ENCODE measurements at regions of chr15 and their contacts with region 1.

Region 1: GRCh38 chr15:43749690-43750345 is 3.6 kb downstream of the PDIA3 start:
- DNase-seq: peak; percentile 71
- H3K4me3 Mint-ChIP-seq: peak overlapping the region; percentile 74
- H3K27ac Mint-ChIP-seq: peak overlapping the region; percentile 89
- H3K4me1 Mint-ChIP-seq: peaks cover 53% of the 10 kb centered on the region
- H3K27me3 Mint-ChIP-seq: no peaks in the 10 kb centered on the region

Region 2: GRCh38 chr15:43329960-43330779 is 419.6 kb before region 1 on chr15 and contains the start of gene LCMT2:
- CTCF ChIA-PET with region 1: no interaction called
- intact Hi-C with region 1: loop called (anchors 1 kb)
- DNase-seq: peak; percentile 93
- H3K4me3 Mint-ChIP-seq: peak within 1 kb of the TSS; percentile 95
- H3K27ac Mint-ChIP-seq: peak within 1 kb of the TSS; percentile 97
- H3K4me1 Mint-ChIP-seq: peaks cover 28% of the 10 kb centered on the region
- H3K27me3 Mint-ChIP-seq: no peaks in the 10 kb centered on the region
- total RNA-seq, gene LCMT2: 4.2 to 4.3 TPM

Region 3: GRCh38 chr15:43769584-43770228 is 19.9 kb after region 1 on chr15:
- CTCF ChIA-PET with region 1: interaction called, 6 read pairs
- intact Hi-C with region 1: loop called (anchors 2 kb)
- DNase-seq: peak; percentile 79
- H3K4me3 Mint-ChIP-seq: no peak overlapping the region
- H3K27ac Mint-ChIP-seq: peak overlapping the region; percentile 59
- H3K4me1 Mint-ChIP-seq: no peaks in the 10 kb centered on the region
- H3K27me3 Mint-ChIP-seq: no peaks in the 10 kb centered on the region

Region 4: GRCh38 chr15:43776718-43777583 is 27.1 kb after region 1 on chr15 and contains the start of gene ELL3:
- CTCF ChIA-PET with region 1: interaction called, 9 read pairs
- intact Hi-C with region 1: loop called (anchors 1 kb)
- DNase-seq: peak; percentile 95
- H3K4me3 Mint-ChIP-seq: peak within 1 kb of the TSS; percentile 89
- H3K27ac Mint-ChIP-seq: peak within 1 kb of the TSS; percentile 84
- H3K4me1 Mint-ChIP-seq: peaks cover 23% of the 10 kb centered on the region
- H3K27me3 Mint-ChIP-seq: no peaks in the 10 kb centered on the region
- total RNA-seq, gene ELL3: 1.0 to 1.2 TPM

Region 5: DNA sequence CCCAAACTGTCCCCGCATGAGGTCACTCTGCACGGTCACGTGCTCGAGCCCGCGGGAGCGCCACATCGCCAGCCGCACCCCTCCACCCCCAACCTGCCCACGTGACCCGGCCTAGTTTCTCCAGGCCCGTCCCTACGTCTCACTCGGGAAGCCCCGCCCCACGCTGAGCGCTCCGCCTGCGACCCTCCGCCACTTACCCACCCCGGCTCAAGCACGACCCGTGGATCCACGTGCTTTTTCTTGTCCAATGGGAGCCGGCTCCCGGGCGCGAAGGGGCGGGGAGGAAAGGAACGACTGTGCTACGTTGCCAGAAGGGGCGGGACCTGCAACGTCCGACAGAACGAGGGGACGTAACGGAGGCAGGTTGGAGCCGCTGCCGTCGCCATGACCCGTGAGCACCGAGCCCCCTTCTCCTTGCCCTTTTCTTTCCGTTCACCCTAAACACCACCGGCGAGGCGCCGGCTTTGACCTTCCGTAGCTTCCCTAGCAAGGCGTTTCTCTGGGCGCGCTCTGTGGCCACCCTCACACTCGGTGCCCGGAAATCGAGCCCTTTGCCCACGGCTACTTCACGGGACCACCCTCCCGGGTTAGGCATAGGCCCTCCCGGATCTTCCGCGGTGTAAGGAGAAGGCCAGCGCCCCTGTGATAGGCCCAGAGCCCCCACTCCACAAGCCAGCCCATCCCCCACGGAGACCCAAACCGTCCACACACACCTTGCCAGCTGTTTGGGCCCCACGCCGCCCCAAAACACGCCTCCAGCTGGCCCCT is 42.4 kb after region 1 on chr15 and contains the start of gene SERF2:
- CTCF ChIA-PET with region 1: no interaction called
- intact Hi-C with region 1: loop called (anchors 1 kb)
- DNase-seq: peak; percentile 100
- H3K4me3 Mint-ChIP-seq: peak within 1 kb of the TSS; percentile 90
- H3K27ac Mint-ChIP-seq: peak within 1 kb of the TSS; percentile 92
- H3K4me1 Mint-ChIP-seq: peaks cover 39% of the 10 kb centered on the region
- H3K27me3 Mint-ChIP-seq: no peaks in the 10 kb centered on the region
- total RNA-seq, gene SERF2: 781 to 808 TPM

Region 6: GRCh38 chr15:43800286-43801141 is 50.7 kb after region 1 on chr15 and contains the start of gene HYPK:
- CTCF ChIA-PET with region 1: no interaction called
- intact Hi-C with region 1: loop called (anchors 2 kb)
- DNase-seq: peak; percentile 94
- H3K4me3 Mint-ChIP-seq: peak within 1 kb of the TSS; percentile 97
- H3K27ac Mint-ChIP-seq: peak within 1 kb of the TSS; percentile 95
- H3K4me1 Mint-ChIP-seq: peaks cover 43% of the 10 kb centered on the region
- H3K27me3 Mint-ChIP-seq: no peaks in the 10 kb centered on the region
- total RNA-seq, gene HYPK: 19.6 to 21.1 TPM